Ovary (tissue), 10 donors: ENCODE measurements at regions of chr14 and their contacts with region 1.

Region 1: DNA sequence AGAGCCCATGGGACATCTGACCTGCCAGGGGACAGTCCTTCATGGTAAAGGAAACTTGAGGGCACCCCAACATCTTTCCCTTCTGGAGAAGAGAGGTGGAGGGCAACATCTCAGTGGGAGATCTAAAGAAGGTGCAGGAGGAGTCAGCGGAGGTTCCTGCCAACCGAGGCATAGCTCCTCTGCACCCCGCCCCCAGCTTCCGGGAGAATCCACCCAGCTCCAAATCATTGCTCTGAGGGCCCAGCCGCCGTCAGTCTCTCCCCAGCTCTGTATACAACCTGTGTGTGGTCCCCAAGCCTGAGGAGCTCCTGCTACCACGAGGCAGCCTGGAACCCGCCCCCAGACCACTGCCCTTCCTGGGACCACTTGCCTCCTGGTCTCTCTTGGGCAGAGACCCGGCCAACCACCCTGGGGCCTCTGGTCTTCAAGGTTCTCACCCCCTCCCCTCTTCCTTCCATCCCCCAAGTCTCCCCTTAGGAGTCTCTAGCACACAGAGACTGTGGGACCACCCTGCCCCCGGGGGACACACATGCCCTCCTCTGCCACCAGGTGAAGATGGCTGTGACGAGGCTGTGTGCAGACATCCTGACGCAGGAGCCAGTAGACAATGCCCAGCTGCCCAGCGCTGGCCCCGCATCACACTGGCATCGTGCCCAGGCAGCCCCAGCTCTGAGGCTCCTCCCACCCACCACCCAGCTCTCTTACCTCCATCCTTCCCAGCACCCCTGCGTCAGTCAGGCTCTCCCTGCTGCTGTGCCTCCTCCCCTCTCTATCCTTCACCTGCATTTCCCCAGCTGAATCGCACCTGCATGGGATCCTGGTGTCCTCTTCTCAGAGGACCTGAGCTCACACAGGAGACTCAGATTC is 13.0 kb upstream of the NUDT14 start:
- DNase-seq: no peak
- H3K4me3 ChIP-seq: no peak overlapping the region
- H3K27ac ChIP-seq: no peak overlapping the region
- H3K4me1 ChIP-seq: no peaks in the 10 kb centered on the region
- H3K27me3 ChIP-seq: no peaks in the 10 kb centered on the region
- CTCF ChIP-seq: no peak
- EP300 ChIP-seq: no peak
- POLR2A ChIP-seq: no peak

Region 2: DNA sequence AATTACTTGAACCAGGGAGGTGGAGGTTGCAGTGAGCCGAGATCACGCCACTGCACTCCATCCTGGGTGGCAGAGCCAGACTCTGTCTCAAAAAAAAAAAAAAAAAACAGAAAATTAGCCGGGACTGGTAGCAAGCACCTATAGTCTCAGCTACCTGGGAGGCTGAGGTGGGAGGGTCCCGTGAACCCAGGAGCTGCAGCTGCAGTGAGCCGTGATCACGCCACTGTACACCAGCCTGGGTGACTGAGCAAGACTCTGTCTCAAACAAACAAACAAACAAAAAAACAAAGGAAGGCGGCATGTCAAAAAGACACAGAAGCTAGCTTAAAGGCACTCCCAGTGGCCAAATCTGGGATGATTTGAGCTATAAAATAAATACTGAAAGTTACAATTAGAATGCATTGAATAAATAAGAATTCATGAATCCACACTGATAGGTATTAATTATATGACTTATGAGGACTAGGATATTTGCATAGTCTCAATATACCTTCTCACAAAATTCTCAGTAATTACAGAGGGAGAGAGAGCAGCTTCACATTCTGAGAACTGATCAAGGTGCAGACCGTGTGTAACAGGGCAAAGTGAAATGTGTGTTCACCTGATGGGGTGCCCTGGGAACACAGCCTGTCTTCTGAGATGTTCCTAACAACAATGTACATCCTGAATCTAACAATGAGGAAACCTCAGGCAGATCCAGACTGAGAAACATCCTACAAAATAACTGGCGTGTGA is 86.2 kb before region 1 on chr14:
- intact Hi-C with region 1: no loop called
- DNase-seq: no peak
- H3K4me3 ChIP-seq: no peak overlapping the region
- H3K27ac ChIP-seq: no peak overlapping the region
- H3K4me1 ChIP-seq: no peaks in the 10 kb centered on the region
- H3K27me3 ChIP-seq: no peaks in the 10 kb centered on the region
- CTCF ChIP-seq: no peak
- EP300 ChIP-seq: no peak
- POLR2A ChIP-seq: no peak

Region 3: GRCh38 chr14:105126981-105127329 is 67.2 kb before region 1 on chr14:
- intact Hi-C with region 1: loop called in 1 of 4 experiments (anchors 2 kb)
- DNase-seq: no peak
- H3K4me3 ChIP-seq: no peak overlapping the region
- H3K27ac ChIP-seq: no peak overlapping the region
- H3K4me1 ChIP-seq: no peaks in the 10 kb centered on the region
- H3K27me3 ChIP-seq: no peaks in the 10 kb centered on the region
- CTCF ChIP-seq: no peak
- EP300 ChIP-seq: no peak
- POLR2A ChIP-seq: no peak

Region 4: DNA sequence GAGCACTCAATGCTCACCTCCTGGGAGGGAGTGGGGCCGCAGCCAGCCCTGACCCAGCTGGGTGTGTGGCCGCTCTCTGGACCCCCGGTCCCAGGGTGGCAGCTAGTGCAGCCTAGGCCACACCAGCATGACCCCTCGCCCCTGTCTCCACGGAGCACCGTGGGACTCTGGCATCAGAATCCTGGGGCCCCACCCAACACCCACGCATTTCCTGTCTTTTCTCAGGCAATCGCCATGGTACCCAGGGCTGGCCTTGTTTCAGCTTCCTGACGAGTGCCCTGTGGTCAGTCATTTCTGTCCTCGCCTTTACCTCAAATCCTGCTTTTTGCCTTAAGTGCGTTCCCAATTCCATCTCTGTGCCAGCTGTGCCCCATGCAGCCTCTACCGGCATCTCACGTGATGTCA is 136.3 kb after region 1 on chr14:
- intact Hi-C with region 1: no loop called
- DNase-seq: no peak
- H3K4me3 ChIP-seq: no peak overlapping the region
- H3K27ac ChIP-seq: no peak overlapping the region
- H3K4me1 ChIP-seq: peaks cover 21% of the 10 kb centered on the region
- H3K27me3 ChIP-seq: no peaks in the 10 kb centered on the region
- CTCF ChIP-seq: no peak
- EP300 ChIP-seq: no peak
- POLR2A ChIP-seq: no peak

Region 5: DNA sequence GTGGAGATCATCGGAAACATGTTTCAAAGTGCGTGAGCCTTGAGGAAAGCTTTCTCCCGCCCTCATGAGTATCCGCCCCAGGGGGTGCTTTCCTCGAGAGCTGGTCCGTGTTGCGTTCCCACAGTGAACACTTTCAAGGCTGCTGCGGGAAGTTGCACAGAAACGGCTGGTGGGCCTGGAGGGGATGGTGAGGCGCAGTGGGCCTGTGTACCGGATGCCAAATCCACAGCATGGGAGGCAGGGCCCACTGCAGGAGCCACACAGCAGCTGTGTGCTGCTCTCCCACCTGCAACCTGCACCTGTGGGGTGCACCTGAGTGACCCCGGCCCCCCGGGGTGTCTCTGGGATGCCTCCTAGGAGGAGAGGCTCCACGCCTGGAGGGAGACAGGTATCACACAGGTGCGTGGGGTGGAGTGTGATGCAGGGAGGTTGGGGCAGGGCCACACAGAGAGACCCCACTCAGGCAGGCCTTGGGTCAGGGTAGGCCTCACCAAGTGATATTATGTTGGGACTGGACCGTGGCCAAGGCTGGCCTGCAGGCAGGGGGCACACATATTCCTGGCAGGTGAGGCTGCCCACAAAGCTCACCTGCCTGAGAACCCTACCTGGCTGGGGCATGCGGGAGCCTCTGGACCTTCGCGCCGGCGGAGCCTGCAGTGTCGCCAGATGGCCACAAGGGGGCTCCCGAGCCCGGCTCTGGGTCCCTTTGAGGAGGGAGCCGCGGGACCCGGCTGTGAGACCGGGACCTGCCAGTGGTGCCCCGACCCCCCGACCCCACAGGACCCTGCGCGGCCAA is 343.4 kb after region 1 on chr14:
- intact Hi-C with region 1: no loop called
- DNase-seq: peak in 4 of 5 donors; percentile 45 to 69 (median 56)
- H3K4me3 ChIP-seq: no peak overlapping the region
- H3K27ac ChIP-seq: no peak overlapping the region
- H3K4me1 ChIP-seq: no peaks in the 10 kb centered on the region
- H3K27me3 ChIP-seq: no peaks in the 10 kb centered on the region
- CTCF ChIP-seq: peak; percentile 45 to 90 (median 60)
- EP300 ChIP-seq: no peak
- POLR2A ChIP-seq: no peak